Activated CD4-positive, alpha-beta T cell treated with anti-CD3 and anti-CD28 coated beads for 36 hours (primary cell): ENCODE measurements at regions of chr1 and their contacts with region 1.

Region 1: GRCh38 chr1:26864610-26865527 is 1.9 kb downstream of the SFN start:
- DNase-seq: peak; percentile 97
- ATAC-seq: peak; percentile 94
- H3K4me3 Mint-ChIP-seq: peak overlapping the region; percentile 89
- H3K27ac Mint-ChIP-seq: peak overlapping the region; percentile 96
- H3K4me1 Mint-ChIP-seq: peaks cover 22% of the 10 kb centered on the region
- H3K27me3 Mint-ChIP-seq: no peaks in the 10 kb centered on the region

Region 2: DNA sequence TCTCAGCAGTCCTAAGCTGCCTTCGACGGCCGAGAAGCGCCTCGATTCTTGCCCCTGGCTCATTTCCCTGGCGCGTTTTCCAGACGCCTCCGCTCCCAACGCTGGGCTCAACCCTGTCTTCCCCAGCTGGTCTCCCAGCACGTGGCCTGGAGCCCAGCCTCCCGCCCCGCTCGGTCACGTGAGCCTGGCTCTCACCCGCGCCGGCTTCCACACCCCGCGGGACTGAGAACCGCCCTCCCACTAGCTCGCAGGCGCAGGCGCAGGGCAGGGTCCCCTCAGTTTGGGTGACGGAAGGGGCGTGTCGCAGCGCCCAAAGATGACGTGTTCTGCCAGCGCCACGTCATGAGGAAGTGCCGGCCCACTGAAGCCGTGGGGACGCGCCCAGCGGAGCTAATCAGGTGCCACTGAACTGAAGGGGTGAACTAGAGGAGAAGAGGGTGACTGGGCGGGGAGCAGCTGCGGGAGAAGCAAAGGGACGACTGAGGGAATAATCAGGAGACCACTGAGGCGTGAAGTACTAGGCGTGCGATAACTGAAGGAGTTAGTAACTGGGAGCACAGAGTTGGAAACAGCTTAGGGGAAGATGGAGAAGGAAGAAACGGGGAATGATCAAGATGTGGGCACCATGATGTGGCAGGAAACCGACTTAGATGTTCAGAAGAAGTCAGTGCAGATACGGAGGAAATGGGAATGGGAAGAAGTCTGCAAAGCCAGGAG is 432.7 kb before region 1 on chr1 and contains the start of gene DHDDS:
- CTCF ChIA-PET with region 1: no interaction called
- POLR2A ChIA-PET with region 1: no interaction called
- intact Hi-C with region 1: loop called in 1 of 2 experiments (anchors 1 kb)
- DNase-seq: peak; percentile 99
- ATAC-seq: peak; percentile 98
- H3K4me3 Mint-ChIP-seq: peak within 1 kb of the TSS; percentile 92
- H3K27ac Mint-ChIP-seq: peak within 1 kb of the TSS; percentile 92
- H3K4me1 Mint-ChIP-seq: peaks cover 17% of the 10 kb centered on the region
- H3K27me3 Mint-ChIP-seq: no peaks in the 10 kb centered on the region
- total RNA-seq, gene DHDDS: 34.1 to 40.7 TPM

Region 3: GRCh38 chr1:26582836-26583460 is 281.9 kb before region 1 on chr1:
- CTCF ChIA-PET with region 1: interaction called, 7 read pairs
- POLR2A ChIA-PET with region 1: no interaction called
- intact Hi-C with region 1: loop called in 1 of 2 experiments (anchors 1 kb)
- DNase-seq: peak; percentile 93
- ATAC-seq: peak; percentile 55
- H3K4me3 Mint-ChIP-seq: peak overlapping the region; percentile 35
- H3K27ac Mint-ChIP-seq: peak overlapping the region; percentile 95
- H3K4me1 Mint-ChIP-seq: peaks cover 54% of the 10 kb centered on the region
- H3K27me3 Mint-ChIP-seq: no peaks in the 10 kb centered on the region

Region 4: DNA sequence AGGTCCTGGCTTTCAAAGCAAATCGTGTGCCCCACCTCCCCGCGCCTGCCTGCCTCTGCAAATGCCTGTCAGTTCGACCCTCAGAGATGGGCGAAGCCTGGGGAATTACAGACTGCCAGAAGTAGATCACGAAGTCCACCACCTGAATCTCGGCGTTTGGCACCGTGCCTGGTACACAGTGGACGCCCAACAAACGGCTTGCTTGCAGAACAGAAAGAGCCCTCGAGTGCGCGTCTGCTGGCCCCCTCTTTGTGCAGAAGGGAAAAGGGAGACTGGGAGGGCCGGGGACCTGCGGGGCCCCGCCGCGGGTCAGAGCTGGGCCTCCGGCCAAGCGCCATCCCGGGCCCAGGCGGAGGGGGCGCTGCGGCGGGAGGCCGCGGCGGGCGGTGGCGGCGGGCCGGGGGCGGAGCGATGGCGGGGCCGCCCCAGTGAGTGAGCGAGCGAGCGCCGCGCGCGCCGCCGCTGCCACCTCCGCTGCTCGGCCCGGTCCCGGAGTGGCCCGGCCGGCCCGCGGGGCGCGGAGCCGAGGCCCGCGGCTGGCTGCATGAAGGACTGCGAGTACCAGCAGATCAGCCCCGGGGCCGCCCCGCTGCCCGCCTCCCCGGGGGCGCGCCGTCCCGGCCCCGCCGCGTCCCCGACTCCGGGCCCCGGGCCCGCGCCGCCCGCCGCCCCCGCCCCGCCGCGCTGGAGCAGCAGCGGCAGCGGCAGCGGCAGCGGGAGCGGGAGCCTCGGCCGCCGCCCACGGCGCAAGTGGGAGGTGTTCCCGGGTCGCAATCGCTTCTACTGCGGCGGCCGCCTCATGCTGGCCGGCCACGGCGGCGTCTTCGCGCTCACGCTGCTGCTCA is 38.4 kb before region 1 on chr1 and contains the start of gene ZDHHC18:
- CTCF ChIA-PET with region 1: interaction called, 5 read pairs
- POLR2A ChIA-PET with region 1: interaction called, 5 read pairs
- intact Hi-C with region 1: loop called in 1 of 2 experiments (anchors 1 kb)
- DNase-seq: peak; percentile 84
- ATAC-seq: peak; percentile 81
- H3K4me3 Mint-ChIP-seq: peak within 1 kb of the TSS; percentile 94
- H3K27ac Mint-ChIP-seq: peak within 1 kb of the TSS; percentile 93
- H3K4me1 Mint-ChIP-seq: peaks cover 52% of the 10 kb centered on the region
- H3K27me3 Mint-ChIP-seq: no peaks in the 10 kb centered on the region
- total RNA-seq, gene ZDHHC18: 51.6 to 66.0 TPM

Region 5: GRCh38 chr1:26882696-26883463 is 18.0 kb after region 1 on chr1:
- CTCF ChIA-PET with region 1: interaction called, 14 read pairs
- POLR2A ChIA-PET with region 1: interaction called, 10 read pairs
- intact Hi-C with region 1: no loop called
- DNase-seq: no peak
- ATAC-seq: no peak
- H3K4me3 Mint-ChIP-seq: no peak overlapping the region
- H3K27ac Mint-ChIP-seq: no peak overlapping the region
- H3K4me1 Mint-ChIP-seq: peaks cover 3% of the 10 kb centered on the region
- H3K27me3 Mint-ChIP-seq: no peaks in the 10 kb centered on the region

Region 6: DNA sequence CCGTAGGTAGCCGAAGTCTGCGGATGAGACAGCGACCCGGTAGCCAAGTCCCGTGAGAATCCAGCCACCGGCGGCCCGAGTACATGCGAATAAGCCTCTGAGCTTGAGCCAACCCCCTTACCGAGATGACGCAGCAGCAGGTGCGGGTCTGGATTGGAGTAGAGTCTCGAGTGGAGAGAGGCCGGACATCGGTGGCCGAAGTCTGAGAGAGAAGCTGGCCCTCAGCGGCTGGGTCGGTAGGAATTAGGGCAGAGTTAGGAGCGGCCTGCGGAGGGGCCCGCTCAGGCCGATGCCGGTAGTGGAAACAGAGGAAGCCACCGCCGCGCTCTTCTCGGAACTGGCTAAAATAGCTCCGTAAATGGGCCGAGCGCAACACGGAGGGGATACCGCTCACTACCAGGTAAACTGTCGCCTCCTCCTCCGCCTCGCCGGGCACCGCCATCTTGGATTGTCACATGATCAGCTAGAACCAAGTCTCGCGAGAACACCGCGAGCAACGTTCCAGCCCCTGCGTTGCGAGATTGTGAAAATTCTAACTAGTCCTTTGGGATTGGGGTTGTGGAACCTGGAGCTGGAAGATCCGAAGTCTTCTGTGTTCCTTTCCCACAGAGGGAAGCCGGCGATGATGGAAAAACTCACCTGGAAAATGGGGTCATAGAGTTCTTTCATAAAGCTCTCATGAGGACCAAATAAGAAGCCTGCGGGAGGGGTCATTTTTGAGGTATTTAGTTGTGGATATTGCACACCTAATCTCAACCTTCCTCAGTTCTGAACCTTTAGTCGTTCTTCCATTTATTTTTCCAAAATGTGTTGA is 35.3 kb after region 1 on chr1 and contains the start of gene GPATCH3:
- CTCF ChIA-PET with region 1: interaction called, 4 read pairs
- POLR2A ChIA-PET with region 1: interaction called, 6 read pairs
- intact Hi-C with region 1: loop called (anchors 1 kb)
- DNase-seq: peak; percentile 95
- ATAC-seq: peak; percentile 93
- H3K4me3 Mint-ChIP-seq: peak within 1 kb of the TSS; percentile 94
- H3K27ac Mint-ChIP-seq: peak within 1 kb of the TSS; percentile 100
- H3K4me1 Mint-ChIP-seq: peaks cover 17% of the 10 kb centered on the region
- H3K27me3 Mint-ChIP-seq: no peaks in the 10 kb centered on the region
- total RNA-seq, gene GPATCH3: 7.0 to 8.7 TPM

Region 7: DNA sequence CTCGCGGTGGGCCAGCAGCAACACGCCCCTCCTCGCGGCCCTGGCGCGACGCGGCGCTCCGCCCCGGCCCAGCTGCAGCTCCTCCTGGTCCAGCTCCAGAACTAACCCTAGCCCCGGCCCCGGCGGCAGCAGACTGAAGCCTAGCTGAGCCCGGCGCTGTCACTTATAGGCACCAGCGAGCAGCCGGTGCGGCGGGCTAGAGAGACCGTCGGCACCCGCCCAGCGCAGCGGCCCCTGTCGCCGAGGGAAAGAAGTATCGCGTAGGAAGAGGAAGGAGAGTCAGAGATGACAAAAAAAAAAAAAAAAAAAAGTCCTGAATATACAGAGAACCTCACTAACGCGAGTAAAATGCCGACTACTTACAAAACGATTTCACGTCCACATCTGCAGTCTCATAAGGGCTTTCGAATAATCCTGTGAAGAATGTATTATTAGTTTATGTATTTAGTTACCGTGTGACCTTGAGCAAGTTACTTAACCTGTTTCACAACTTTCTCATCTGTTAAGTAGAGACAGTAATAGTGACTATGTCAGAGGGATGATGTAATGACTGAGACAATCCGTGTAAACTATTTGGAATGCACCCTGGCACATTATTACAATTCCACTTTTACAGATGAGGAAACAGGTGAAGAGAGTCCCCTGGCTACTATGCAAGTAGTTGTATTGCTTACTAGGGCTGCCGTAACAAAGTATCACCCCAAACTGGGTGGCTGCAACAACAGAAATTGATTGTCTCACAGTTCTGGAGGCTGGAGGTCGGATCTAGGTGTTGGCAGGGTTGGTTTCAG is 290.3 kb after region 1 on chr1 and contains the start of gene SLC9A1:
- CTCF ChIA-PET with region 1: no interaction called
- POLR2A ChIA-PET with region 1: no interaction called
- intact Hi-C with region 1: loop called in 1 of 2 experiments (anchors 1 kb)
- DNase-seq: peak; percentile 95
- ATAC-seq: peak; percentile 90
- H3K4me3 Mint-ChIP-seq: peak within 1 kb of the TSS; percentile 81
- H3K27ac Mint-ChIP-seq: peak within 1 kb of the TSS; percentile 97
- H3K4me1 Mint-ChIP-seq: peaks cover 42% of the 10 kb centered on the region
- H3K27me3 Mint-ChIP-seq: no peaks in the 10 kb centered on the region
- total RNA-seq, gene SLC9A1: 15.6 to 20.4 TPM